ENCODE measurements at regions of chr18 and their contacts with region 1.

Region 1: DNA sequence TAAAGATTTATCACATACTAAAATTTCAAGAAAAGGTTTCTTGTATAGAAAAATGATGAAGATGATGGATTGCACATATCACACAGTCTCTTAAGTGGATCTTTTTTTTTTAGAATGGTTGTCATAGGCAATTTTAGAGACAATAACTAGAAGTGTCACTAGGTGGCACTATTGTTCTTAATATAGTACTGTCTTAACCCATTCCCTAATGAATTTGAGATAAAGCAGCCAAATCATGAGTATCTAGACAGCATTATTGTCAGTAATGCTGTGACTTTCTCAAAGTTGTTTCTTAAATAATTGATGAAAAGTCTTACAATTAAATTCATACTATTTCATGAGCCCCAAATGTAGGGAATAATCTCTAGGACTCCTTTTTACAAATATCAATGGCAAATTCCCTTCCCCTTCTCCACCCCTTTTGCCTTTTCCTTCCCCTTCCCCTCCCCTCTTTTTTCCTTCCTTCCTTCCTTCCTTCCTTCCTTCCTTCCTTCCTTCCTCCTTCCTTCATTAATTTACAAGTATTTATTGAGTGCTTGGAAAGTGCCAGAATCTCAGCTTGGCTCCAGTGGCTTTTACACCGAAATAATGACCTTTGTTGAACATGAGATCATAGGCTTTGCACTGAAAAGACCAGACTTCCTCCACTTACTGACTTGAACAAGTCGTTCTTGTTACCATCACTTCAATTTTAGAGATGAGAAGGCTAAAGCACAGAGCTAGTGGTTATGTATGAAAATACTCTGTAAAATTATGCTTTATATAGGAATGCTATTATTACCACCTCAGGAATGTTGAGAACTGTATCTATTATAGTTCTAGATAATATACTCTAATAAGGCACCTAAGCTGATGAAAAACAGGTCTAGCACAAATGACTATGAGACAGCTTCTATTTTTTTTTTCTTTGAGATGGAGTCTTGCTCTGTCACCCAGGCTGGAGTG is 19.8 kb downstream of the MYL12B start:
- DNase-seq: no peak
- ATAC-seq: peak; percentile 85

Region 2: DNA sequence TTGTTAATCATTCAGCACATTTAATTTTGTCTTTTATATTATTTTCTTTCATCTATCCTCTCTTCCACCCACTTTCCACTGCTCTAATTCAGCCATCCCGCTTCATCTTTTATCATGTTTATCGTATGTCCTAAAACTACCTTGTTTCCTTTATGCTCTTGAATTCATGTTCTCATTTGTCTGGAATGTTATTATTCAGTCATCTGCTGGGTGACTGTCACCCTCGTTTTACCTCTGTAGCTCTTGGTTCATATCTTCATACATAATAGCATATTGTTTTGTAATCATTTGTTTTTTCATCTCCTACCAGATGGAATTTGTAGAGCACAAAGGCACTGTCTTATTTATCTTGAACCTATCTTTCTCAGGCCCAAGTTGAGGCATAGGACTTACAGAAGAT is 589.2 kb before region 1 on chr18:
- intact Hi-C with region 1: no loop called
- DNase-seq: no peak
- ATAC-seq: no peak

Region 3: DNA sequence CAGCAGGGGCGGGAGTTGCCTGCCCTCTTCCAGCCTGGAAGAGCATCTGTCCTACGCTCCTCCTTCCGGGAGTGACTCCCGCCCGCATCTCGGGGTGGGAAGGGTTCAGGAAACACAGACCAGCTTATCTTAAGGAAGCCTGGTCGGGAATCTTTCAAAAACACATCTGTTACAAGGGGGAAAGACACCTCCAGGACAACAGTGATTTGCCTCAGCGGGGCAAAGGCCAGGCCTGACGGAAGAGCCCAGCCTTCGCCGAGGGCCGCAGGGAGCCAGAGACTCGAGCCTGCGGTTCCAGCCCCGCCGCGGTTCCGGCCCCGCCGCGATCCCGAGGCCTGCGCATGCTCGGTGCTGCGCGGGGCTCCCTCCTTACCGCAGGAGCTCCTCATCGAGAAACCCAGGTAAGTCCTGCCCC is 130.1 kb after region 1 on chr18:
- intact Hi-C with region 1: no loop called
- DNase-seq: peak; percentile 65
- ATAC-seq: peak; percentile 83

Region 4: DNA sequence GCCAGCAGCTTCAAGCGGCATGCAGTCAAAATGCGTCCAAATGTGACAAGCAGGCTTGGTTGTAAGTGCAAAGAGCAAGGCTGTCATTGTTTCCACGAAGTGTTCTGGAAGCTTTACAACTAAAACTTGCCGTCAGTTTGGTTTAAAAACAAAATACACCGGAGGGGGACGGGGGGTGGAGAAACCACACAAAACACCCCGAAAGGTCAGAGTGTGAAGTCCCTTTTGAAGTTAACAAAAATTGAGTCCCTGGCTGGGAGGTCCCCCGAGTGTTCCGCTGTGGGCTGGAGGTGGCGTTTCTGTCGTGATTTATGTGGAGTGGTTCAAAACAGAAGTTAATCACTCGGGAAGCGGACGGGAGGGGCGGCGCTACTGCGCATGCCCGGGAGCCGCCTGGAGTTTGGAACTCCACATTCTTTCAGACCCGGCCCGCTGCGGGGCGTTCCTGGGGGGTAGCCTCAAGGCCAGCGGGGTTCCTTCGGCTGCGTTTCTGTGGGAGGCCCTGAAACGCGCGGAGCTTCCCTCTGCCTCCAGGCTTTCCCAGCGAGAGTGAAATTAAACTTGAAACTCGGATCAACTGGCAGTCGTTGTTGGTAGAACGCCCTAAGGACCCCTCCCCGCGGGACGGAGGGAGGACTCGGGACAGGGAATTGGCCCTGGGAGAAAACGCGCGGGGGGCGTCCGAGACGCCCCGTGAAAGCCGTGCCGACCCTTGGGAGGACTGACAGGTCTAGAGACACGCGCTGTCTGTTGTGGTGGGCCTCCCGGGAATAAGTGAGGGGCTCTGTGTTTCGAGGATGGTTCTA is 169.7 kb after region 1 on chr18:
- intact Hi-C with region 1: loop called (anchors 5 kb)
- DNase-seq: peak; percentile 97
- ATAC-seq: peak; percentile 62

Region 5: DNA sequence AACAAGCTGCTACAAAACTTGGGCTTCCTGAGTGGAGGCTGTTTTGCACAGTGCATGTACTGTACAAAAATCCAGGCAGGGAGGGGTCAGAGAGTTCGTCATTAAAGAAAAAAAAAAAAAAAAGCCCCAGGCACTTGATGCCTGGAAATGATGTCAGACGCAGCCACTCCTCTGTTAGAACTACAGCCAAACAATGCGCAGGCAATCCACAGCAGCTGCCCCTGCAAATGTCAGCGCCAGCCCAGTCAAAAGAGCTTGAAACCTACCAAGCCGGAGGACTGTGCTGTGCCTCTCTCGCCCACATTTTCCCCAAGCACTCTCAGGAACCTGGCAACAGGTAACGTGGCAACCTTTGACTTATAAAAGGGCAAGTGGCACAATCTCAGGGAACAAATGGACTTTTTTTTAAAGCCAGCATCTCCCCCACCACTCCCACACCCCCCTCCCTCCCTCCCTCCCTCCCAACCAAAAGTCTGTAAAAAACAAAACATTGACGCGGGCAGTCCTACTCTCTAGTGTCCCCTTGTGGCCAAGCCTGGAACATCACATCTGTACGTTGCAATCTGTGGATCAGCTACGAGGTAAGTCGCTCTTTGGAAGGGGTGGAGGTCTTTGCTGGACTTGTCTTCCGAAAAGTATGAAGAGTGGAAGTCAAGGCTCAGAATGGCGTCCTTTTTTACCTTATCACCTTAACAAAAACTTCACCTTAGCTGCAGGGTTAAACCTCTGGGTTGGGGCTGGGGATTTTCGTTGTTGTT is 312.4 kb after region 1 on chr18:
- intact Hi-C with region 1: loop called (anchors 10 kb)
- DNase-seq: peak; percentile 83
- ATAC-seq: peak; percentile 85

Region 6: GRCh38 chr18:3665780-3666525 is 384.2 kb after region 1 on chr18:
- intact Hi-C with region 1: loop called (anchors 1 kb)
- DNase-seq: peak; percentile 81
- ATAC-seq: peak; percentile 96

Region 7: DNA sequence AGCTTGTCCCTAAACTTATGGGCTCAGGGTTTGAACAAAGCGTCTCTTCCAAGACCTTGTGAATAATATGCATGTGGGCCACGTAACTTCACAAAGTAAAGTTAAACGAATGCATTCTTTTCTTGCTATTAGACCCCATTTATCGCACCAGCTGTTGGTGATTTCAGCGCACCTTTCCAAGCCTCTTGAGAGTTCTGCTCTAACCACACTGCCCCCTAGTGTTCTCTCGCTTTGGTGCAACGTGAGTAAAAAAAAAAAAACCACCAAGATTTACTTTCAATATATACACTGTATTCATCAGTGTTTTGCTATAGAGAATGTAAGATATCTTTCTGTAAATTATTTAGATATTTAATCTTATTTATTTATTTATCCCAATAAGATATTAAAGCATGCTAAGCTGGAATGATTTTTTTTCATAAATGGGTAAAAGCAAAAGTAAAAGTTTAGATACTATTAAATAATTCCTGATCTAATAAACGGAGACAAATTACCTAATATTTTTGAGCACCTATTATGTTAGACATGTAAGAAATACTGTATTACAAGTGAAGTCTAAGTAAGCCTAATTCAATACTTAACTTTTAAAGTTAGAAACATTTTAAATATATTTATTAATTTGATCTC is 713.9 kb after region 1 on chr18:
- intact Hi-C with region 1: loop called (anchors 10 kb)
- DNase-seq: no peak
- ATAC-seq: peak; percentile 51